ENCODE measurements at regions of chr1 and their contacts with region 1.

Region 1: GRCh38 chr1:116570358-116571200 is at the start of gene CD58:
- DNase-seq: peak; percentile 65
- ATAC-seq: peak; percentile 92
- H3K4me3 ChIP-seq: peak within 1 kb of the TSS; percentile 72 to 85 (median 74)
- H3K27ac ChIP-seq: peak within 1 kb of the TSS; percentile 72
- H3K4me1 ChIP-seq: peaks cover 33% of the 10 kb centered on the region
- H3K27me3 ChIP-seq: peaks cover 0 to 20% of the 10 kb centered on the region in 2 experiments; a peak in 2 of 5 replicates
- CTCF ChIP-seq: peak; percentile 75
- EP300 ChIP-seq: no peak
- POLR2A ChIP-seq: peak; percentile 53 to 69
- RAD21 ChIP-seq: peak; percentile 25; the same call in 1 of the 2 replicates
- total RNA-seq, gene CD58: 5.3 and 9.4 TPM in 2 replicates

Region 2: DNA sequence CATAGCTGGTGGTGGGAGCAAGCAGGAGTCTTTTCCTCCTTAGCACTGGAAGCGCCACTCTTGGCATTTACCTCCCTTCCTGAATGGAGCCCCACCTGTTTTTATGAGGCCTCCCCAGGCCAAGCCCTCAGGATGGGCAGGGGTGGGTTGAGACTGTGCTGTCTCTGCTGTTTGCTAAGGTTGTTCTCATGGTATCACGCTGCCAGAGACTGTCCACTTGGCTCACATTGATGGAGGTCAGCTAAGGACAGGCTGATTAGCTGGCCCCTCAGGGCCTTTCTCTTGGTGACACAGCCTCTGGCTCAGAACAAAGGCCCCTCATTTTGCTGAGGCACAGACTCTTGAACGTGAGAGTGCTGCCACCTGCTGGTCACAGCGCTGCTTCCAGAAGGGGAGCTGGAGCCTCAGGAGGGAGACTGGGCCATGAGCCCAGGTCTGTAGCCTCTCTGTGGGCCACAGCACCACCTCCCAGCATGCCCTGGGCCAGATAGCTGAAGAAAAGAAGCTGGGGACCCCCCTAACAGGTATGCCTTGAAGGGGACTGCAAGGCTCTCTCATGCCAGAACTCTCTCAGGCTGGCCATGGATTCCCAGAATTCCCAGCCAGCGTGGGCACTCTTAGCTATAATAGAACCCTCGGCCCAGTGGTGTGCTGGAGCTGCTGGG is 85.4 kb before region 1 on chr1:
- CTCF ChIA-PET with region 1: no interaction called
- POLR2A ChIA-PET with region 1: no interaction called
- in situ Hi-C with region 1: no loop called
- intact Hi-C with region 1: no loop called
- DNase-seq: peak; percentile 88
- ATAC-seq: peak; percentile 89
- H3K4me3 ChIP-seq: no peak overlapping the region
- H3K27ac ChIP-seq: peak overlapping the region; percentile 63
- H3K4me1 ChIP-seq: peaks cover 100% of the 10 kb centered on the region
- H3K27me3 ChIP-seq: no peaks in the 10 kb centered on the region
- CTCF ChIP-seq: peak; percentile 99
- EP300 ChIP-seq: peak in 1 of 2 experiments; percentile 63; a peak in 2 of 4 replicates
- POLR2A ChIP-seq: no peak
- RAD21 ChIP-seq: peak; percentile 99

Region 3: GRCh38 chr1:116504308-116505156 is 66.0 kb before region 1 on chr1:
- CTCF ChIA-PET with region 1: no interaction called
- POLR2A ChIA-PET with region 1: no interaction called
- in situ Hi-C with region 1: no loop called
- intact Hi-C with region 1: loop called (anchors 5 kb)
- DNase-seq: no peak
- ATAC-seq: peak; percentile 31
- H3K4me3 ChIP-seq: no peak overlapping the region
- H3K27ac ChIP-seq: peak overlapping the region; percentile 43
- H3K4me1 ChIP-seq: peaks cover 56% of the 10 kb centered on the region
- H3K27me3 ChIP-seq: no peaks in the 10 kb centered on the region
- CTCF ChIP-seq: no peak
- EP300 ChIP-seq: 0 out of 4 replicates have a peak, but pooled peaks of 1 of the 2 experiments have one; percentile 10
- POLR2A ChIP-seq: no peak
- RAD21 ChIP-seq: no peak

Region 4: DNA sequence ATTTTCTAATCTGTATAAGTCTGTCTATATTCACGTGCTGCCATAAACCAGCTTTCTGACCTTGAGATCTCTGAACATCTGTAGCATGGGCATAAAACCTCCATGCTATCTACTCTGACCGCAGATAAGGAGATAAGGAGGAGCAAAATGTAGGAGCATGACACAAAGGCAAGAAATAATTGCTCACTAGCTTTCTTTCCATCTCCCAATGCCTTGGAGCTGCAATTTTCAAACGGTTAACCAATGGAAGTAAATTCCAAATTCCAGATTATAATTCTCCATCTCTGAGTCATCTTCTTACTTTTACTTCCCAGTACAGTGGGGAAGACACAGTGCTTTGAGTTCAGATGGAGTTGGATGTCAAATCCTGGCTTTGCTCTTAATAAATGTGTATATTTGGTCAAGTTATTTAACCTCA is 41.4 kb before region 1 on chr1:
- CTCF ChIA-PET with region 1: no interaction called
- POLR2A ChIA-PET with region 1: no interaction called
- in situ Hi-C with region 1: no loop called
- intact Hi-C with region 1: loop called (anchors 5 kb)
- DNase-seq: no peak
- ATAC-seq: no peak
- H3K4me3 ChIP-seq: no peak overlapping the region
- H3K27ac ChIP-seq: peak overlapping the region; percentile 2
- H3K4me1 ChIP-seq: peaks cover 37% of the 10 kb centered on the region
- H3K27me3 ChIP-seq: no peaks in the 10 kb centered on the region
- CTCF ChIP-seq: no peak
- EP300 ChIP-seq: no peak
- POLR2A ChIP-seq: no peak
- RAD21 ChIP-seq: no peak

Region 5: GRCh38 chr1:116664366-116664977 is 93.9 kb after region 1 on chr1:
- CTCF ChIA-PET with region 1: no interaction called
- POLR2A ChIA-PET with region 1: no interaction called
- in situ Hi-C with region 1: no loop called
- intact Hi-C with region 1: no loop called
- DNase-seq: no peak
- ATAC-seq: no peak
- H3K4me3 ChIP-seq: no peak overlapping the region
- H3K27ac ChIP-seq: no peak overlapping the region
- H3K4me1 ChIP-seq: peaks cover 8% of the 10 kb centered on the region
- H3K27me3 ChIP-seq: peaks cover 3 to 27% of the 10 kb centered on the region in 2 experiments; a peak in 4 of 5 replicates
- CTCF ChIP-seq: no peak
- EP300 ChIP-seq: no peak
- POLR2A ChIP-seq: no peak
- RAD21 ChIP-seq: no peak

Region 6: GRCh38 chr1:116679091-116679827 is 108.7 kb after region 1 on chr1:
- CTCF ChIA-PET with region 1: no interaction called
- POLR2A ChIA-PET with region 1: no interaction called
- in situ Hi-C with region 1: no loop called
- intact Hi-C with region 1: loop called (anchors 10 kb)
- DNase-seq: no peak
- ATAC-seq: no peak
- H3K4me3 ChIP-seq: no peak overlapping the region
- H3K27ac ChIP-seq: no peak overlapping the region
- H3K4me1 ChIP-seq: no peaks in the 10 kb centered on the region
- H3K27me3 ChIP-seq: no peaks in the 10 kb centered on the region; a peak in 1 of 5 replicates
- CTCF ChIP-seq: 0 out of 2 replicates have a peak, but pooled peaks have one; percentile 10
- EP300 ChIP-seq: no peak
- POLR2A ChIP-seq: no peak
- RAD21 ChIP-seq: no peak

Region 7: DNA sequence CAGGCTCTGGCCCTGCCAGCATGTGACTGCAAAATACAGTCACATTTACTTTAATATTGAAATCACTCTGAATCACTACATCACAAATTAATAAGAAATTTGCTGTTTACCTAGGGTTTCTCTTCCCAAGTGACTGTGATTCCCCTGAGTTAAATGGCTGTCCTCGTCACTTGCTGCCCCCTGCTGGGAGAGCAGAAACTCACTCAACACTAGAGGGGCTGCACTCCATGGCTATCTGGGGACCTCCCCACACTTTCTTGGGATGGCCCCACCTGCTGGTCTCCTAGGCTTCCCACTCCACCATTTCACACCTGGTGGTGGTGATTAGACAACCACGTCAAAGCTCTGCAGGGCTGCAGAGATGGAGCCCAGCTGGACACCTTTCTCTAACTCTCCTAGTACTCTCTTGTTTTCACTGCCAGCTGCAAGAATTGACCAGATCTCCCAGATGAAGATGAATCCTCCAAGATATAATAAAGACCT is 247.0 kb after region 1 on chr1:
- CTCF ChIA-PET with region 1: interaction called, 5 read pairs
- POLR2A ChIA-PET with region 1: no interaction called
- in situ Hi-C with region 1: no loop called
- intact Hi-C with region 1: loop called (anchors 10 kb)
- DNase-seq: peak; percentile 76
- ATAC-seq: peak; percentile 100
- H3K4me3 ChIP-seq: no peak overlapping the region
- H3K27ac ChIP-seq: no peak overlapping the region
- H3K4me1 ChIP-seq: no peaks in the 10 kb centered on the region
- H3K27me3 ChIP-seq: no peaks in the 10 kb centered on the region
- CTCF ChIP-seq: peak; percentile 77
- EP300 ChIP-seq: no peak
- POLR2A ChIP-seq: no peak
- RAD21 ChIP-seq: peak; percentile 79

Measured in HepG2 (cell line).